ENCODE measurements at regions of chr15 and their contacts with region 1.

Region 1: GRCh38 chr15:70679919-70680231 is 83.5 kb downstream of the UACA start:
- DNase-seq: no peak
- H3K4me3 ChIP-seq: no peak overlapping the region
- H3K4me3 Mint-ChIP-seq: no peak overlapping the region
- H3K27ac ChIP-seq: no peak overlapping the region
- H3K27ac Mint-ChIP-seq: no peak overlapping the region
- H3K4me1 ChIP-seq: no peaks in the 10 kb centered on the region
- H3K4me1 Mint-ChIP-seq: peaks cover 2 to 4% (median 3%) of the 10 kb centered on the region in 4 donors
- H3K27me3 ChIP-seq: peaks cover 3% of the 10 kb centered on the region
- H3K27me3 Mint-ChIP-seq: peaks cover 11 to 13% of the 10 kb centered on the region in 2 donors

Region 2: DNA sequence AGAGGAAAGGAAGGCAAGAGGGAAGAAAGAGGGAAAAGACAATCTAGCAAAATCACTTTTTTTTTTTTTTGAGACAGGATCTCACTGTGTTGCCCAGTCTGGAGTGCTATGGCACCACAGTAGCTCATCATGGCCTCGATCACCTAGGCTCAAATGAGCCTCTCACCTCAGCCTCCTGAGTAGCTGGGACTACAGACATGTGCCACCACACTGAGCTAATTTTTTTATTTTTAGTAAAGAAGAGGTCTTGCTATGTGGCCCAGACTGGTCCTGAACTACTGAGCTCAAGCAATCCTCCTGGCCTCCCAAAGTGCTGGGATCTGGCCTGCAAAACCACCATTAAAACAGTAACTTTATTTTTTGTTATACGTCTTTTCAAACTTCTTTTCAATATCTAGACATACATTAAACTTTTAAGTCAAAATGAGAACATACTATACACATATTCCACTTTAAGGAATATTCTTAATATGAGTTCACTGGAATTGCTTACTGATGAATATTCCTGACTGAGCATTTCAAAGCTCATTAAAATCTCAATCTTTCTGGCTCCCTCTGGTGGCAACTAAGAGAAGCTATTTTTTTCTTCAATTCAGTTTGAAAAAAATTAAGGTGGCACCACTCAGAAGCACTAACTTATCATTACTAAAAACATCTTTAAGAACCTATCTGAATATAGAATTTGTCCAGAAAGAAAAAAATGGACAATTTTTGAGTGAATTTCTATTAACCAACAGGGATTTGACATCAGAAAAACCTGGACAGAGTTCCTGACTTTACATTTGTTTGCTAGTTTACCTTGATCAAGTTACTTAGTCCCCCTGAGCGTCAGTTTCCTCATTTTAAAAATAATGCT is 42.6 kb after region 1 on chr15:
- CTCF ChIA-PET with region 1: interaction called, 65 read pairs
- POLR2A ChIA-PET with region 1: no interaction called
- intact Hi-C with region 1: loop called (anchors 10 kb)
- DNase-seq: peak in 4 of 5 donors; percentile 25 to 39 (median 30)
- H3K4me3 ChIP-seq: no peak overlapping the region
- H3K4me3 Mint-ChIP-seq: no peak overlapping the region
- H3K27ac ChIP-seq: no peak overlapping the region
- H3K27ac Mint-ChIP-seq: no peak overlapping the region
- H3K4me1 ChIP-seq: no peaks in the 10 kb centered on the region
- H3K4me1 Mint-ChIP-seq: peaks cover 0 to 2% (median 0%) of the 10 kb centered on the region in 4 donors
- H3K27me3 ChIP-seq: no peaks in the 10 kb centered on the region
- H3K27me3 Mint-ChIP-seq: peaks cover 13 to 14% of the 10 kb centered on the region in 2 donors

Region 3: GRCh38 chr15:70810916-70811578 is 131.2 kb after region 1 on chr15:
- CTCF ChIA-PET with region 1: interaction called, 21 read pairs
- POLR2A ChIA-PET with region 1: no interaction called
- intact Hi-C with region 1: no loop called
- DNase-seq: no peak
- H3K4me3 ChIP-seq: no peak overlapping the region
- H3K4me3 Mint-ChIP-seq: no peak overlapping the region
- H3K27ac ChIP-seq: no peak overlapping the region
- H3K27ac Mint-ChIP-seq: no peak overlapping the region
- H3K4me1 ChIP-seq: peaks cover 3% of the 10 kb centered on the region
- H3K4me1 Mint-ChIP-seq: peaks cover 0 to 9% (median 5%) of the 10 kb centered on the region in 4 donors
- H3K27me3 ChIP-seq: no peaks in the 10 kb centered on the region
- H3K27me3 Mint-ChIP-seq: peaks cover 11 to 13% of the 10 kb centered on the region in 2 donors

Region 4: GRCh38 chr15:71011503-71012155 is 331.8 kb after region 1 on chr15:
- CTCF ChIA-PET with region 1: no interaction called
- POLR2A ChIA-PET with region 1: no interaction called
- intact Hi-C with region 1: no loop called
- DNase-seq: no peak
- H3K4me3 ChIP-seq: no peak overlapping the region
- H3K4me3 Mint-ChIP-seq: no peak overlapping the region
- H3K27ac ChIP-seq: no peak overlapping the region
- H3K27ac Mint-ChIP-seq: no peak overlapping the region
- H3K4me1 ChIP-seq: no peaks in the 10 kb centered on the region
- H3K4me1 Mint-ChIP-seq: no peaks in the 10 kb centered on the region
- H3K27me3 ChIP-seq: no peaks in the 10 kb centered on the region
- H3K27me3 Mint-ChIP-seq: peaks cover 10 to 11% of the 10 kb centered on the region in 2 donors